ENCODE measurements at regions of chr14 and their contacts with region 1.

Region 1: DNA sequence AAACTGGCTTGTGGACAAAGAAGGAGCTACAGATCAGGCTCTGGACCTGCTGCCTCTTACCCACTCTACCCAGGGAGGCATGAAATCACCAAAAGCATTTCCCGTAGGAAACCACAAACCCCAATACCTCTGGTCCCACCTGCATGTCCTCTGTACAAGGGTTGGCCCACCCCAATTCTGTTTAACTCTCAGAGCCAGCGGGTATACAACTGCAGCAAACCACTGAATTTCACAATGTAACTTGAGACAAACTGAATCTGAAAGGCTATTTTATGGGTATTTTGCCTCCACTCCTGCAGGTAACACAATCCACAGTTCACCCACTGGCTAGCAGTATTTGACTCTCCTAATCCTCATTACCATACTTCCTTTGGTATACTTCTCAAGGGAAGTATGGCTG is 16.5 kb downstream of the SIX1 start:
- DNase-seq: no peak
- ATAC-seq: no peak
- H3K4me3 ChIP-seq: no peak overlapping the region
- H3K27ac ChIP-seq: no peak overlapping the region
- H3K4me1 ChIP-seq: peaks cover 0 to 4% (median 0%) of the 10 kb centered on the region in 3 donors
- H3K27me3 ChIP-seq: peaks cover 0 to 14% (median 8%) of the 10 kb centered on the region in 4 donors
- CTCF ChIP-seq: no peak

Region 2: DNA sequence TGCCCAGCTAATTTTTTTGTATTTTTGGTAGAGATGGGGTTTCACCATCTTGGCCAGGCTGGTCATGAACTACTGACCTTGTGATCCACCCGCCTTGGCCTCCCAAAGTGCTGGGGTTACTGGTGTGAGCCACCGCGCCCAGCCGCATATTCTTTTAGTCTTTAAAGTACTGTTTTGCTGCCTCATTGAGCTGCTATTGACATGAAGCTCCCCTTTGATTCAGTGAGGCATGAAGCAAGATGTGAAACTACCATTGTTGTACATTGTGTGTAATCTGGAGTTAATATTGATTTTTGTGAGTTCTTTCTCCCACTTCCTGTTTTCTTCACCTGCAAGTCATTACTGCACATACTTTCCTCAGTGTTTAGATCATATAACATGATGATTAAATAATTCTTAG is 182.6 kb after region 1 on chr14:
- intact Hi-C with region 1: no loop called
- DNase-seq: no peak
- ATAC-seq: no peak
- H3K4me3 ChIP-seq: no peak overlapping the region
- H3K27ac ChIP-seq: no peak overlapping the region
- H3K4me1 ChIP-seq: no peaks in the 10 kb centered on the region
- H3K27me3 ChIP-seq: no peaks in the 10 kb centered on the region
- CTCF ChIP-seq: no peak

Region 3: GRCh38 chr14:61025251-61026223 is 392.8 kb after region 1 on chr14:
- intact Hi-C with region 1: loop called in 1 of 3 experiments (anchors 5 kb)
- DNase-seq: peak in 5 of 6 donors; percentile 24 to 59 (median 33)
- ATAC-seq: peak in 3 of 4 donors; percentile 81 to 90 (median 85)
- H3K4me3 ChIP-seq: no peak overlapping the region
- H3K27ac ChIP-seq: no peak overlapping the region
- H3K4me1 ChIP-seq: no peaks in the 10 kb centered on the region
- H3K27me3 ChIP-seq: no peaks in the 10 kb centered on the region
- CTCF ChIP-seq: peak; percentile 55 to 85 (median 62)

Region 4: DNA sequence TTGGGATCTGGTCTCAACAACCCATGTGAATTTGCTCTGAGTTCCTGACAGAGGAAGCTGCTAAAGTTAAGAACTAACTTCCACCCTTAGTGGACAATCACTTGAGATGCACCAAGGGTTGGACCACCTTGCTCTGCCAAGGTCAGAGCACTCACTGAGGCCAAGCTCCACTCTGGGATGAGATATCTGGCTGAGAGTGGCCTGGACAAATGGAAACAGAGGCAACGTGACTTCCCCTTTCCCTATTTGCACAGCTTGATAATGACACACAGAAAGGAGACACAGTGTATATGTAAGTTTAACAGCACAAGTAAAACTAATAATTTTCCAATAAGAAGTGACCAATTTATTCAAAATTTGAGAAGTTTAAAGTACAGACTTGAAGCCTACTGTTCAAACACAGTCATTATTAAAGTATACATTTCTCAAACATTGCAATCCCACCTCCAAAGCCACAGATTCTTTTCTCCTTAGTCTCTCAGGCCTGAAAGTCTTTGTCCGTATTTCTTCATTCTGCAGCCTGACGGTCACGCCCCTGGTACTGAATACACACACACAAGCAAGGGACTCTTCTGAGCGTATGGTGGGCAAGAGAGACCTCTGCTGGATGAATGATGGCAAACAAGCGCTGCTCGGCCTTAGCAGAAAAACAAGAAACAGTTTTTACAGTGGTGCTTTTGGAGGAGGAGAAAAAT is 619.7 kb after region 1 on chr14:
- intact Hi-C with region 1: loop called in 2 of 3 experiments (anchors 5 to 10 kb)
- DNase-seq: peak in 5 of 6 donors; percentile 52 to 75 (median 64)
- ATAC-seq: peak; percentile 96 to 100 (median 99)
- H3K4me3 ChIP-seq: no peak overlapping the region
- H3K27ac ChIP-seq: no peak overlapping the region
- H3K4me1 ChIP-seq: no peaks in the 10 kb centered on the region
- H3K27me3 ChIP-seq: no peaks in the 10 kb centered on the region
- CTCF ChIP-seq: peak; percentile 37 to 70 (median 68)

Measured in pancreas (tissue), 10 donors.